Heart right ventricle (tissue), 16 donors: ENCODE measurements at regions of chrX and their contacts with region 1.

Region 1: GRCh38 chrX:115625572-115626301 is 64.8 kb downstream of the PLS3 start:
- DNase-seq: no peak
- ATAC-seq: peak in 7 of 8 donors; percentile 31 to 66 (median 43)
- H3K4me3 ChIP-seq: no peak overlapping the region
- H3K27ac ChIP-seq: peak overlapping the region in 7 of 10 donors; percentile 17 to 71 (median 62)
- H3K4me1 ChIP-seq: peaks cover 0 to 80% (median 11%) of the 10 kb centered on the region in 9 donors
- H3K27me3 ChIP-seq: peaks cover 0 to 88% (median 0%) of the 10 kb centered on the region in 7 donors
- CTCF ChIP-seq: no peak

Region 2: DNA sequence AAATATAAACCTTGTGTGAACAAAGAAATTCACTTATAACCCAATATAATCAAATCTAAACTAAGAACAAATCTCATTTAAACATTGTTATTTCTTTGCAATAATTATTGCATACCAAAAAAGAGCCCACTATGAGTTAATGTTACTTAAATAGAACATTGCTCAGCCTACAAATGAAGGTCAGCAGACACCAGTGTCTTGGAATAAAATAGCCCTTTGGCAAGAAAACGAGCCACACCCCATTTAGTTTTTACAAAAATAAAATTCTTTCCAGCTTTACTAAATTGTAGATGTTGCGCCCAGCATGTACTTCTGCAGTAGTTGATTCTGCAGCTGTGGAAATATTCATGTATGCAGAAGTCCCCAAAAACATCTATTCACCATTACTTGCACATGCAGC is 52.6 kb before region 1 on chrX:
- intact Hi-C with region 1: loop called in 1 of 10 experiments (anchors 10 kb)
- DNase-seq: no peak
- ATAC-seq: peak in 7 of 8 donors; percentile 53 to 82 (median 74)
- H3K4me3 ChIP-seq: no peak overlapping the region
- H3K27ac ChIP-seq: peak overlapping the region in 9 of 10 donors; percentile 16 to 67 (median 52)
- H3K4me1 ChIP-seq: peaks cover 0 to 41% (median 0%) of the 10 kb centered on the region in 9 donors
- H3K27me3 ChIP-seq: peaks cover 0 to 35% (median 0%) of the 10 kb centered on the region in 7 donors
- CTCF ChIP-seq: no peak

Region 3: GRCh38 chrX:115949898-115950822 is 324.4 kb after region 1 on chrX:
- intact Hi-C with region 1: no loop called
- DNase-seq: no peak
- ATAC-seq: peak in 3 of 8 donors; percentile 44 to 63 (median 47)
- H3K4me3 ChIP-seq: no peak overlapping the region
- H3K27ac ChIP-seq: no peak overlapping the region
- H3K4me1 ChIP-seq: no peaks in the 10 kb centered on the region
- H3K27me3 ChIP-seq: peaks cover 0 to 19% (median 0%) of the 10 kb centered on the region in 7 donors
- CTCF ChIP-seq: peak in 2 of 9 donors; percentile 11 to 16